ENCODE measurements at regions of chr10 and their contacts with region 1.

Region 1: DNA sequence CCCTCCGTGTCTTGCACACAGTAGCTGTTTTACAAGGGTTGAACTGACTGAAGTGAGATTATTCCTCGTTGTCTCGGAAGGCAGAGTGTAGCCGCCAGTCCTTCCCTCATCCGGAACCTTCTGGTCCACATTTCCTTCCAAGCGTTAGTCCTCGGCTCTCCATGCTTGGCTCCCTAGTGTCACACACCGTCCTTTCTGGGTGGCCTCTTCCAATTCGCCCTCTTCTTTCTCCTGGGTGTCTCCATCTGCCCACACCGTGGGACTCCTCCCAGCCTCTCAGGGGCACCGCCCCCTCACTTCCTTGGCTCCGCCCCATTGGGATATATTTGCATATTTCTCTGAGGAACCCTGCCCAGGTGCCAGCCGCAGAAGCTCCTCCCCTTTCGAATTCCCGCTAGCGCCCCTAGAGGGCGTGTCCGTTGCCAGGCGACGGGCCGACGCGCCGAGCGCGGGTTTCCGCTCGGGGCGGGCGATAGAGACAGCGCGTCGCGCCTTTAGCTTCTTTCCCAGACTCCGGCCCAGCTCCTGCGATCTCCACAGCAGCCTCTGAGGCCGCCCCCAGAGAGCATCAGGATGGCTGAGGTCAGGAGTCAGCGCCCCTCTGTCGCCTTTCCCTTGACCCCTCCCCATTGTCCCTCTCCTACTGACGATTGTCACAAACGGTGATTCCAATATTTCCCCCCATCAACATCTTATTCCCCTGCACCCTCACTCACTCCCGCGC is at the start of gene CFAP58:
- DNase-seq: peak; percentile 89
- ATAC-seq: peak; percentile 98
- H3K4me3 ChIP-seq: peak within 1 kb of the TSS; percentile 62 to 96
- H3K27ac ChIP-seq: peak within 1 kb of the TSS; percentile 37
- H3K4me1 ChIP-seq: peaks cover 20% of the 10 kb centered on the region
- H3K27me3 ChIP-seq: no peaks in the 10 kb centered on the region
- CTCF ChIP-seq: peak; percentile 91
- total RNA-seq, gene CFAP58: 2.0 TPM

Region 2: GRCh38 chr10:104274762-104275721 is 78.4 kb before region 1 on chr10:
- CTCF ChIA-PET with region 1: interaction called, 19 read pairs
- POLR2A ChIA-PET with region 1: no interaction called
- in situ Hi-C with region 1: no loop called
- intact Hi-C with region 1: loop called (anchors 2 kb)
- DNase-seq: no peak
- ATAC-seq: peak; percentile 97
- H3K4me3 ChIP-seq: peak overlapping the region; percentile 61 to 82
- H3K27ac ChIP-seq: peak overlapping the region; percentile 87
- H3K4me1 ChIP-seq: peaks cover 9% of the 10 kb centered on the region
- H3K27me3 ChIP-seq: no peaks in the 10 kb centered on the region
- CTCF ChIP-seq: peak; percentile 100

Region 3: GRCh38 chr10:104306897-104307296 is 46.6 kb before region 1 on chr10:
- CTCF ChIA-PET with region 1: interaction called, 23 read pairs
- POLR2A ChIA-PET with region 1: no interaction called
- in situ Hi-C with region 1: no loop called
- intact Hi-C with region 1: loop called (anchors 1 kb)
- DNase-seq: no peak
- ATAC-seq: peak; percentile 23
- H3K4me3 ChIP-seq: no peak overlapping the region
- H3K27ac ChIP-seq: peak overlapping the region; percentile 5; the same call in 1 of the 2 replicates
- H3K4me1 ChIP-seq: peaks cover 49% of the 10 kb centered on the region
- H3K27me3 ChIP-seq: no peaks in the 10 kb centered on the region
- CTCF ChIP-seq: no peak

Region 4: GRCh38 chr10:104328896-104329710 is 24.4 kb before region 1 on chr10:
- CTCF ChIA-PET with region 1: no interaction called
- POLR2A ChIA-PET with region 1: no interaction called
- in situ Hi-C with region 1: no loop called
- intact Hi-C with region 1: no loop called
- DNase-seq: peak; percentile 98
- ATAC-seq: peak; percentile 71
- H3K4me3 ChIP-seq: peak overlapping the region; percentile 12 to 32
- H3K27ac ChIP-seq: peak overlapping the region; percentile 98
- H3K4me1 ChIP-seq: peaks cover 96% of the 10 kb centered on the region
- H3K27me3 ChIP-seq: no peaks in the 10 kb centered on the region
- CTCF ChIP-seq: no peak

Region 5: GRCh38 chr10:104391150-104391968 is 37.9 kb after region 1 on chr10:
- CTCF ChIA-PET with region 1: no interaction called
- POLR2A ChIA-PET with region 1: no interaction called
- in situ Hi-C with region 1: no loop called
- intact Hi-C with region 1: no loop called
- DNase-seq: no peak
- ATAC-seq: no peak
- H3K4me3 ChIP-seq: no peak overlapping the region
- H3K27ac ChIP-seq: no peak overlapping the region
- H3K4me1 ChIP-seq: no peaks in the 10 kb centered on the region
- H3K27me3 ChIP-seq: peaks cover 39% of the 10 kb centered on the region
- CTCF ChIP-seq: no peak